ENCODE measurements at regions of chr4 and their contacts with region 1.

Region 1: DNA sequence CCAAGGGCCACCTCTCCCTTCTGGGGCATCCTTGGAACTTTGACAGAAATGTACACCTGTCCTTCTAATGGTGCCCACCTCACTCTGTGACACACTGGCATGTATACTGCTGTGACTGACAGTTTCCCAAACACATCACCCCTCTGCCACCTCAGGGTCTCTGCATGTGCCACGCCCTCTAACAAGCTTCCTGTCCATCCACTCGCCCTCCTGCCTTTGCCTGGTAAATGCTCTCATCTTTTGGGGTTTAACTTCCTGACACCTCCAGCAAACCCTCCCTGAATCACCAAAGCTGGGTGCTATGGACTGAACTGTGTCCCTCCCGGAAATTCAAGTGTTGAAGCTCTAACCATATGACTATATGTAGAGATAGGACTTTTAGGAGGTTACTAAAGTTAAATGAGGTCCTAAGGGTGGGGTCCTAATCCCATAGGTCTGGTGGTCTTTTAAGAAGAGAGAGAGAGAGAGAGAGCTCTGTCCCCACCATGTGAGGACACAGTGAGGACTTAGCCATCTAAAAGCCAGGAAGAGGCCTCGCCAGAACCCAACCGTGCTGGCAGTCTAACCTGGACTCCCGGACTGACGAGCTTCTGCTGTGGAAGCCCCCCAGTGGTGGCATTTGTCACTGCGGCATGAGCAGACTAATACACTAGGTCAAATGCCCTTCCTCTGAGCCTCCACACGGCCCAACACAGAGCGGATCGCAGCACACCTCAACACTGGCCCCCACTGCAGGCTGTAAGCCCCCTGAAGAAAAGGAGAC is 95.6 kb downstream of the AFAP1 start:
- DNase-seq: peak; percentile 79
- ATAC-seq: peak; percentile 95
- H3K4me3 Mint-ChIP-seq: no peak overlapping the region
- H3K27ac Mint-ChIP-seq: no peak overlapping the region
- H3K4me1 Mint-ChIP-seq: peaks cover 17% of the 10 kb centered on the region
- H3K27me3 Mint-ChIP-seq: no peaks in the 10 kb centered on the region

Region 2: DNA sequence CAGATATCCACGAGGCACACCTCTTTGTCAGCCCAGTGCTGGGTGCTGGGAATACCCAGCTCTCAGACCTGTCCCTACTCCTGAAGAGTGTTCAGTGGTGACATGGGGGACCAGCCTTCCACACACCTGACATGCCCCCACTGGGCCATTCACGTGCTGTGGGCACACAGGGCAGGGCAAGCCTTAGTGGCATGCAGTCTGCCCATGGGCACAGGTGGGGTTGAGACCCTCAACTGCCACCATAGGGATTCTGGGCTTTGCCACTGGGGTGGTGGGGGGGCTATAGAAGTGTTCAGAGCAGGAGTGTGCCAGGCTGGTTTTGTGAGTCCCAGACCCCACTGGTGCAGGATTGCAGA is 392.6 kb before region 1 on chr4:
- CTCF ChIA-PET with region 1: no interaction called
- POLR2A ChIA-PET with region 1: no interaction called
- DNase-seq: no peak
- ATAC-seq: no peak
- H3K4me3 Mint-ChIP-seq: no peak overlapping the region
- H3K27ac Mint-ChIP-seq: no peak overlapping the region
- H3K4me1 Mint-ChIP-seq: no peaks in the 10 kb centered on the region
- H3K27me3 Mint-ChIP-seq: no peaks in the 10 kb centered on the region

Region 3: DNA sequence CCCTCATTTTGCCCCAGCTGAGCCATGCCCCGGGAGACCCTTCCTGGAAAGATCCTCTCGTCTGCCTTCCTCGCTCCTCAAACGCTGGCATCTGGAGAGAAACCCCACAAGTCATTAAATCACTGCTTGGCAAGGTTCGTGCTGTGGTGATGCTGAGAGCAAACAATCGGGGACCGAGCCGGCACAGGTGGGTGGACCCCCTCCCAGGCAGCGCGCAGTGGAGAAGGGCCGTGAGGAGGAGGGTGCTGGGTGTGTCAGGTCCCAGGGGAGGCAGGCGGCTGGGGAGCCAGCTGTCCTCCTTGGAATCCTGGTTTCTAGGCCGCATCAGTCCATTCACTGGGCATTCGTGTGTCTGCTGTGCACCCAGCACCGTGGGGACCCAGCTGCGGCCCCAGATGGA is 344.4 kb before region 1 on chr4:
- CTCF ChIA-PET with region 1: no interaction called
- POLR2A ChIA-PET with region 1: no interaction called
- DNase-seq: no peak
- ATAC-seq: no peak
- H3K4me3 Mint-ChIP-seq: no peak overlapping the region
- H3K27ac Mint-ChIP-seq: no peak overlapping the region
- H3K4me1 Mint-ChIP-seq: no peaks in the 10 kb centered on the region
- H3K27me3 Mint-ChIP-seq: no peaks in the 10 kb centered on the region

Region 4: DNA sequence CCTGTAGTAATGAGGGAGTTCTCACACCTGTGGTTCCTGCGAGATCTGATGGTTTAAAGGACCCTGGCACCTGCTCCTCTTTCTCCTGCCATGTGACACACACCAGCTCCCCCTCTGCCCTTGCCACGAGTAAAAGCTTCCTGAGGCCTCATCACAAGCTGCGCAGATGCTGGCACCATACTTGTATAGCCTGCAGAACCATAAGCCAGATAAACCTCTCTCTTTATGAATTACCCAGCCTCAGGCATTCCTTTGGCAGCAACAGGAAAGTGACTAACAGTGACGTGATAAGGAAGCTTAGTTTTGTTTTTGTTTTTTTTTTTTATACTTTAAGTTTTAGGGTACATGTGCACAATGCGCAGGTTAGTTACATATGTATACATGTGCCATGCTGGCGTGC is 35.3 kb before region 1 on chr4:
- CTCF ChIA-PET with region 1: interaction called, 64 read pairs
- POLR2A ChIA-PET with region 1: interaction called, 3 read pairs
- DNase-seq: no peak
- ATAC-seq: no peak
- H3K4me3 Mint-ChIP-seq: no peak overlapping the region
- H3K27ac Mint-ChIP-seq: no peak overlapping the region
- H3K4me1 Mint-ChIP-seq: peaks cover 4% of the 10 kb centered on the region
- H3K27me3 Mint-ChIP-seq: no peaks in the 10 kb centered on the region

Region 5: DNA sequence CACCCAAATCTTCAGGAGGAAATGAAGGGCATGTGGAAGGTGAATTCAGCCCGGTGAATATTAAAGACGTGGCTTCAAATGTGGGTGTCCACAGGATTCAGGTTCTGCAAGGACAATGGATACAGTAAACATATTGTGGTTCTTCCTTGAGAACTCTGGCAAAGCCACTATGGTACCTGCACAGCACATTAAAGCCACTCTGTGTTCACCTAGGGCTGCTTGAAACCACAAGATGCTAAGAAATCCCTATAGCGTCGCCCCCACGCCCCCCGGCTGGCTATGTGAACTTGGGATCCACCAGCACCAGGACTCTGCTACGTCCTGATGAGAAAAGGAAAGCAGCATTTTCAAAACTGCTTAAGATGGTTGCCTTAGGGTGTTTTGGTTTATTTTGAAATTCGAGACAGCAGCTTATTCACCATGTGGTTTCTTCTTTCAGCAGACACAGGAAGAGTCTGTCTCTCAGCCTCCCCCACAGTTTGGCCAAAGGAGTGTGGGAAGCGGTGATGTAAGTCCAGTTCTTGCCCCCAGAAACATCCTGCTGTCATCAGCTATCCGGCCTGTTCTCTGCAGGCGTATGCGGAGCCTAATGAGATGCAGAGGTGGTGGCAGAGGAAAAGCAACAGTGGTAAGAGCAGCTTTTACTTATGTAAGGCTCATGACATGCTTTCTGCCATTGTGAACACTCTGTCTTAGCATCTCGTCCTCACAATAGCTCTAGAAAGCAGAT is 15.9 kb before region 1 on chr4:
- CTCF ChIA-PET with region 1: interaction called, 32 read pairs
- POLR2A ChIA-PET with region 1: no interaction called
- DNase-seq: peak; percentile 72
- ATAC-seq: peak; percentile 76
- H3K4me3 Mint-ChIP-seq: peak overlapping the region; percentile 49
- H3K27ac Mint-ChIP-seq: peak overlapping the region; percentile 89
- H3K4me1 Mint-ChIP-seq: peaks cover 37% of the 10 kb centered on the region
- H3K27me3 Mint-ChIP-seq: no peaks in the 10 kb centered on the region

Region 6: DNA sequence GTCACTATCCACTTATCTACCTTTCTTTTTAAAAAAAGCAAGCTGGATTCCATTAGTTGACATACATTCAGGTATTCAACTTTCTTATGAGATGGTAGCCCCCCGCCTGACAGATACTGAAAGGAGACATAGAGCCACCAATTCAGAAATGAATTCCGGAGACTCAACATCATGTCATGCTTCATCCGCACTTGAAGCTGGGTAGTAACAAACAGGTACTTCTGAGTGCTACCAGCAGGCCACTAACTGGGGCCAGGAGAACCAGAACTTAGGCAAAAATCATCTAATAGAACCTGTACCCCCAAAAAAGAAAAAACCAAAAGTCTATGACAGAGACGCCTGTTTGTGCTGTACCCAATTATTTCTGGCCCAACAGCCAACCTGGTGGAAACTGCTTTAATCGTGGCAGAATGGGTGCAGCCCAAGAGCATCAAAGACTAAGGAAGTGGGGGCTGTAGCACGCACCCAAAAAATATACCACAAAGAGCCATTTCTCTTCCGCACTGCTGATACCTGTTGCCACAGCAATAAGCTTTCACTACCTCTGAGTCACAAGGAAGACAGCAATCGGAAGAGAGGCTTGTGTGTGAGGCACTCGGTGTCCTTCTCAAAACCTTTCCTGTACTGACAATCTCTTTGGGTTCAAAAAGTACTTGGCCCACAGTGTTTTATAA is 10.8 kb after region 1 on chr4:
- CTCF ChIA-PET with region 1: interaction called, 41 read pairs
- POLR2A ChIA-PET with region 1: interaction called, 11 read pairs
- DNase-seq: peak; percentile 84
- ATAC-seq: peak; percentile 97
- H3K4me3 Mint-ChIP-seq: peak overlapping the region; percentile 55
- H3K27ac Mint-ChIP-seq: peak overlapping the region; percentile 92
- H3K4me1 Mint-ChIP-seq: peaks cover 64% of the 10 kb centered on the region
- H3K27me3 Mint-ChIP-seq: peaks cover 2% of the 10 kb centered on the region

Region 7: DNA sequence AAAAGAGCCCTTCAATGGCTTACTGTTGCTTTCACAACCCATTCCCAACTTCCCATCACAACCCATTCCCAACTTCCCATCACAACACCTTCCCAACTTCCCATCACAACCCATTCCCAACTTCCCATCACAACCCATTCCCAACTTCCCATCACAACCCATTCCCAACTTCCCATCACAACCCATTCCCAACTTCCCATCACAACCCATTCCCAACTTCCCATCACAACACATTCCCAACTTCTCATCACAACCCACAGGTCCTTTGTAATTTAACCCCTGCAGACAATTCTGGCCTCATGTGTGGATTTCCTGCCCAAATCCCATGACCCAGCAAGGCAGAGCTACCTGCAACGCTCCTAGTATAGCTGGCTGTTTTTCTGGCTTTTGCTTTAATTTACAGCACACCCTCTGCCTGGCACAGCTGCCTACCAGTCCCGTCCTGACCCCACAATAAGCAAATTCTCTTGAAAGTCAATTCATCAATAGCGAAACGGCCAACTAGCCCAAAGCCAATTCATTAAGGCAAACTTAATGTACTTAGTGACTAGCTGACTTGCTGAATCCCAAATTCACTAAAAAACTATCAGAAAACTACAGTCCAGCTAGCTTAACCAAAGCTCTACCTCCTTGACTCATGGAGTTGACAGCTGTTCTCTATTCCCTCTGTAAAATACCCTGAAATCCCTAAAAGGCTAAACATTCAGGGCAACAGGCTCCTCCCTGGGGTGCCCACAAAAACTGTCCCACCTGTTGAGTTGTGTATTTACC is 20.1 kb after region 1 on chr4:
- CTCF ChIA-PET with region 1: interaction called, 10 read pairs
- POLR2A ChIA-PET with region 1: no interaction called
- DNase-seq: peak; percentile 50
- ATAC-seq: peak; percentile 69
- H3K4me3 Mint-ChIP-seq: peak overlapping the region; percentile 34
- H3K27ac Mint-ChIP-seq: peak overlapping the region; percentile 68
- H3K4me1 Mint-ChIP-seq: peaks cover 18% of the 10 kb centered on the region
- H3K27me3 Mint-ChIP-seq: no peaks in the 10 kb centered on the region

Region 8: DNA sequence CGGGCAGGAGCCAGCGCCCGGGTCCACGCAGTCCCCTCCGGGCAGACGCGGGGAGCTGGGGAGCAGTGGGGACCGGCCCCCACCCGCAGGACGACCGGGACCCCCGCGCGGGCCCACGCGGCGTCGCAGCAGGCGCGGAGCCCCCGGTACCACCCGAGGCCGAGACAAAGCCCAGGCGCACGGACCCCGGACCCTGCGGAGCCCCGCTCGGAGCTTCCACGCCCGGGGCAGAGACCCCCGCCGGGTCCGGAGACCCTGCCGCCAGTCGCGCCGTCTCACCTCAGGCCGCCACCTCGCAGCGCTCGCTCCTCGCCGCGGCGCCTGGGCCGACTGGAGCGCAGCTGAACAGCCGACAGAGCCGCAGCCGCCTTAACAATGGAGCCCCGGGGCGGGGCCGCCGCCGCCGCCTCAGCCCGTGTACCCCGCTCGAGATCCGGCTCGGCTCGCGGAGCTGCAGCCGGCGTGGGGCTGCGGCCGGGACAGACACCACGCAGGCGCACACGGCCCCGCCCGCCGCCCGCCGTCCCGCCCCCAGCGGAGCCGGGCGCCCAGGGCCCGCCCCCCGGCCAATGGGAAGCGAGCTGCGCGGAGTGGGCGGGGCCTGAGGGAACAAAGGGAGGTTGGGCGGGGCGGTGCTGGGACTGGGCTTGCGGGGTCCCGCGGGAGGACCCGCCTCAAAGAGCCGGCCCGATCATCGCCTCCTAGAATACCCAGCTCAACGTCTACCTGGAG is 95.5 kb after region 1 on chr4 and contains the start of gene AFAP1:
- CTCF ChIA-PET with region 1: interaction called, 11 read pairs
- POLR2A ChIA-PET with region 1: interaction called, 3 read pairs
- DNase-seq: peak; percentile 86
- ATAC-seq: peak; percentile 97
- H3K4me3 Mint-ChIP-seq: peak within 1 kb of the TSS; percentile 63
- H3K27ac Mint-ChIP-seq: no peak within 1 kb of the TSS
- H3K4me1 Mint-ChIP-seq: peaks cover 20% of the 10 kb centered on the region
- H3K27me3 Mint-ChIP-seq: peaks cover 27% of the 10 kb centered on the region
- total RNA-seq, gene AFAP1: 5.3 to 6.2 TPM

Region 9: DNA sequence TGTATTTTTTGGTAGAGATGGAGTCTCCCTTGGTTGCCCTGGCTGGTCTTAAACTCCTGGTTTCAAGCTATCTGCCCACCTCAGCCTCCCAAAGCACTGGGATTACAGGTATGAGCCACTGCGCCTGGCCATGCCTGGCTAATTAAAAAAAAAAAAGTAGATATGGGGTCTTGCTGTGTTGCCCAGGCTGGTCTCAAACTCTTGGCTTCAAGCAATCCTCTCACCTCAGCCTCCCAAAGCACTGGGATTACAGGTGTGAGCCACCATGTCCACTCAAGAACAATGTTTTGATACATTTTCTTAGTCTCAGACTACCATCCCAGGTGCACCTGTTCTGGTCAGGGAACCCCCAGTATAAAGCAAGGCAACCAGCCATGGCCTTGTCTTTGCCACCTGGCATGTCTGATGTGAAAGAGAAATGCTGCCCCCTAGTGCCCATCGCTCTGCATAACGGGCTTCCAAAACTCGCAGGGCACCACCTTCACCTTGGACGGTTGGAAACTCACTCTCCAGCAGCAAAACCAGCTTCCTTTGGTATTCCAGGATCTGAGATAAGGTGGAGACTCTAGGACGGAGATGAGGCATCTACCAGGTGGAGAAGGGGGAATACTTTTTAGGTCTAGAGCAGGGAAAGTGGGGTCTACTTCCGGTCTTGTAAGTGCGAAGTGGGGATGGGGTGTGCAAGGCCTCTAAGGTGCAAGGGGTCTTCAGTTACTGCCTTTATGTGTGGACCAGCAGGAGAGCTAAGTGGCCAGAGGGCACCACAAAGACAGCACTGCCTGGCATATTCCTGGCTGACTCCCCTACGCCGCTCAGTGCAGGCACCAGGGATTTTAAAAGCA is 143.4 kb after region 1 on chr4:
- CTCF ChIA-PET with region 1: interaction called, 16 read pairs
- POLR2A ChIA-PET with region 1: no interaction called
- DNase-seq: peak; percentile 85
- ATAC-seq: peak; percentile 90
- H3K4me3 Mint-ChIP-seq: no peak overlapping the region
- H3K27ac Mint-ChIP-seq: no peak overlapping the region
- H3K4me1 Mint-ChIP-seq: peaks cover 10% of the 10 kb centered on the region
- H3K27me3 Mint-ChIP-seq: peaks cover 2% of the 10 kb centered on the region

Region 10: DNA sequence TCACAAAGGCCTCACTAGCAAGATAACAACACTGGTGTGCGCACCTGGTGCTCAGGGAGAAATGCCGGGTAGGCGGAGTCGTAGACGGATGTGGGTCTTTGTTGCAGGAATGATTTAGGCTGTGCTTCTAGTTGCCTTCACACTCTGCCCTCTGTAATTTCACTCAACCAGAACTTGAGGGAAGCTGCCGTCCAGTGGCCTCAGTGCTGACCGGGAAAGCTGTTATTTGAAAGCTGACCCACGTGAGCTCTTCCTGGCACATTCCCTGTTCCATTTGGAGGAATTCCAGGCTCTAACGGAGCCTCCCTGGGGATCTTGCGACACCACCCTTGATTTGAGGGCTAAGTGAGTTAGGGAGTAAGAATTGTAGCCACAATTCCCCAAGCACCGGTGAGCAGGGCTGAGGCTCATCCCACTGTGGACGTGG is 371.0 kb after region 1 on chr4:
- CTCF ChIA-PET with region 1: no interaction called
- POLR2A ChIA-PET with region 1: no interaction called
- DNase-seq: no peak
- ATAC-seq: no peak
- H3K4me3 Mint-ChIP-seq: no peak overlapping the region
- H3K27ac Mint-ChIP-seq: no peak overlapping the region
- H3K4me1 Mint-ChIP-seq: peaks cover 7% of the 10 kb centered on the region
- H3K27me3 Mint-ChIP-seq: no peaks in the 10 kb centered on the region

Measured in activated CD8-positive, alpha-beta T cell treated with anti-CD3 and anti-CD28 coated beads, Interleukin-2, amount 10 ng/mL, durations not matched to agents 7 days and 5 days (primary cell).